CD14-positive monocyte (primary cell): ENCODE measurements at regions of chr5 and their contacts with region 1.

Region 1: DNA sequence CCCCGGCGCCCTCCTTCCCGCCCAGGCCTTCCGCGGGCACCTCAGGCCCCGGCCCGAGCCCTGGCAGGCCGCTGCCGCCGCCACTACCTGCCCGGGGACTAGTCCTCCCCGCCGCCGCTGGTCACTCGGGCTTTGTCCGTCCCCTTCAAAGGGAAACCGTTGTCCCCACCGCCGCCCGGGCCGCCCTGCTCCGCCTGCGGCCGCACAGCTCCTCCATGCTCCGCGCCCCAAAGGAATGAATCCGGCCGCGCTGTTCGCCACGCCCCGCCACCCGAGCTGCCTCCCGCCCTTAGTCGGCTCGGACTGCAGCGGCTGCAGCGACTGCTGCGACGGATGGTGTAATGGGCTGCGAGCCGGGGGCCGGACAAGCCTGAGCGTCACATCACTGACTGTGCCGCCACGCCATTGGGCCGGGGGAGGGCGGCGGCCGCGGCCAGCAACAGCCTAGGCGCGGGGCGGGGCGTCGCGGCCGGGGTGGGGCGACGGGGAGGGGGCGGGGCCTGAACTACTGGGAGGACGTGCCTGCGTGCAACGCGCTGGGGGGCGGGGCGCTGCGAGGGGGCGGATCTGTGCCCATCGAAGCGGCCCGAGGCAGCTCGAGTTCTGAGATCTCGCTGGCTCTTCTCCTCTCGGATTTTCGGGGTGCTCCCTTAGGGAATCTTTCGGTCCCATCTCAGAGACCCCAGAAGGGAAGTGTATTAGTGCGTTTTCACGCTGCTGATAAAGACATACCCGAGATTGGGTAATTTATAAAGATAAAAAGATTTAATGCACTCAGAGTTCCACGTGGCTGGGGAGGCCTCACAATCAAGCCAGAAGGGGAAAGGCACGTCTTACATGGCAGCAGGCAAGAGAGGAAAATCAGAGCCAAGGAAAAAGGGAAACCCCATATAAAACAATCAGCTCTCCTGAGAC is at the start of gene FEM1C:
- DNase-seq: peak; percentile 96 to 98 (median 97)
- H3K4me3 ChIP-seq: peak within 1 kb of the TSS; percentile 61 to 96 (median 77)
- H3K4me3 Mint-ChIP-seq: peak within 1 kb of the TSS; percentile 92 to 95
- H3K27ac ChIP-seq: peak within 1 kb of the TSS; percentile 91 to 97
- H3K27ac Mint-ChIP-seq: peak within 1 kb of the TSS; percentile 94 to 99 (median 98)
- H3K4me1 ChIP-seq: peaks cover 23 to 42% of the 10 kb centered on the region in 2 donors
- H3K4me1 Mint-ChIP-seq: peaks cover 41% of the 10 kb centered on the region
- H3K27me3 ChIP-seq: no peaks in the 10 kb centered on the region
- H3K27me3 Mint-ChIP-seq: no peaks in the 10 kb centered on the region
- CTCF ChIP-seq: no peak
- polyA plus RNA-seq, gene FEM1C: 2.5 to 18.2 (median 2.6) TPM

Region 2: DNA sequence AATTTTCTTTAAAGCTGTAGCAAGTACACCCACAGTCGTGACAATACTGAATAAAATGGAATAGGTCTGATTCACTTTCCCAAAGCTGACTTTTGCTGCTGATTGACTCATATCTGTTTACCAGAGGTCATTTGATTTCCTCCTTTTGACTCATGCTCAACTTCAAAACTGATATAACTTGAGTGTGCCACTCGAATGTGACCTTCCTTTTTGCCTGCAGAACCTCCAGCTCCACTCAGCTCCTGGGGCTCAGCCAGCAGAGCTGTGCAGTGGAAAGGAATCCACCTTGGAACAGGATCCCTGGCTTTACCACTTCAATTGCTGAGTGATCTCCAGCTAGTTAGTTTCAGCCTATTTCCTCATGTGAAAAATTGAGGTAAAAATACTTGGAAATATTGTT is 84.2 kb before region 1 on chr5:
- intact Hi-C with region 1: loop called in 1 of 2 experiments (anchors 5 kb)
- DNase-seq: peak; percentile 35 to 84 (median 72)
- H3K4me3 ChIP-seq: no peak overlapping the region
- H3K4me3 Mint-ChIP-seq: no peak overlapping the region
- H3K27ac ChIP-seq: no peak overlapping the region
- H3K27ac Mint-ChIP-seq: no peak overlapping the region
- H3K4me1 ChIP-seq: peaks cover 11 to 12% of the 10 kb centered on the region in 2 donors
- H3K4me1 Mint-ChIP-seq: peaks cover 16% of the 10 kb centered on the region
- H3K27me3 ChIP-seq: no peaks in the 10 kb centered on the region
- H3K27me3 Mint-ChIP-seq: peaks cover 2 to 7% (median 6%) of the 10 kb centered on the region in 3 donors
- CTCF ChIP-seq: no peak

Region 3: GRCh38 chr5:115601701-115602590 is 57.3 kb after region 1 on chr5 and contains the start of gene TICAM2:
- intact Hi-C with region 1: loop called in 1 of 2 experiments (anchors 10 kb)
- DNase-seq: peak; percentile 84 to 90 (median 87)
- H3K4me3 ChIP-seq: peak within 1 kb of the TSS; percentile 84 to 95 (median 89)
- H3K4me3 Mint-ChIP-seq: peak within 1 kb of the TSS; percentile 77 to 89
- H3K27ac ChIP-seq: peak within 1 kb of the TSS; percentile 84 to 93
- H3K27ac Mint-ChIP-seq: peak within 1 kb of the TSS; percentile 94 to 98 (median 96)
- H3K4me1 ChIP-seq: peaks cover 55 to 56% of the 10 kb centered on the region in 2 donors
- H3K4me1 Mint-ChIP-seq: peaks cover 53% of the 10 kb centered on the region
- H3K27me3 ChIP-seq: no peaks in the 10 kb centered on the region
- H3K27me3 Mint-ChIP-seq: peaks cover 0 to 3% (median 3%) of the 10 kb centered on the region in 3 donors
- CTCF ChIP-seq: peak; percentile 42
- polyA plus RNA-seq, gene TICAM2: 3.5 to 25.1 (median 14.6) TPM

Region 4: GRCh38 chr5:115641948-115642347 is 97.3 kb after region 1 on chr5:
- intact Hi-C with region 1: no loop called
- DNase-seq: no peak
- H3K4me3 ChIP-seq: no peak overlapping the region
- H3K4me3 Mint-ChIP-seq: no peak overlapping the region
- H3K27ac ChIP-seq: no peak overlapping the region
- H3K27ac Mint-ChIP-seq: no peak overlapping the region
- H3K4me1 ChIP-seq: no peaks in the 10 kb centered on the region
- H3K4me1 Mint-ChIP-seq: no peaks in the 10 kb centered on the region
- H3K27me3 ChIP-seq: peaks cover 0 to 2% of the 10 kb centered on the region in 2 donors
- H3K27me3 Mint-ChIP-seq: peaks cover 6 to 16% (median 10%) of the 10 kb centered on the region in 3 donors
- CTCF ChIP-seq: no peak